Right ventricle myocardium inferior (tissue), 1 donor: ENCODE measurements at regions of chr3 and their contacts with region 1.

Region 1: DNA sequence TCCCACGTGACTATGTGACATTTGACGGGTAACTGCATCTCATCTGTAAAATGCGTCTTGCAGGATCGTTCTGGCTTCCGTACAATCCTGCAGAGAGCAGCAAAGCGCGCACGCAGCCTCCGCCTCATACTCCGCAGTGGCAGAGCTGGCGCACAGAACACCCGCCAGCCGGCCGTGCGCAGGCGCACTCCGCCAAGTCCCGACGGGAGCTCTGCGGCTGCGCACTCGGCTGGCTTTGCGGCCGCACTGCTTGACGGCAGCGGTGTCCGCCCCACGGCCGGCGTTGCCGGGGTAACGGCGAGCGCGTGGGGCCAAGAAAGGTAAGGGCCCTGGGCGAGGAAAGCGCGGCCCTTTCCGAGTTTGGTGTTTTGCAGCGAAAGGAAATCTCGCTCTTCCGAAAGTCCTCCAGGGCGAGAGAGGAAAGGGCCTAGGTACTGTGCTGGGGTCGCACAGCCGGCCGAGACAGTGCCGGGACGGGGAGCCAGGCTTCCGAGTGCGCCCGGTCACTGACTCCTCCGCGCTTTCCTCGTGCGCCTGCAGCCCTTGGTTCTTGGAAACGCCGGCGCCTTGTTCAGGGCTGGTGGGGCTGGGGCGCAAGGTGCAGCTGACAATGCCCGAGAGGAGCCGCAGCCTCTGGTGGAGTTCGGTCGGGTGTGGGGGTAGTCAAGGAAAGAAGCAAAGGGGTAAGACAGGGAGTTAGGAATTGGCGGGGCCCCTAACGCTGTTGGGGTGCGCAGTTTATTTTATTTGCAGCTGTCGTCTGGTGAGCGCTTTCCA is at the start of gene TSEN2:
- DNase-seq: peak; percentile 98
- ATAC-seq: peak; percentile 96
- total RNA-seq, gene TSEN2: 24.1 TPM

Region 2: DNA sequence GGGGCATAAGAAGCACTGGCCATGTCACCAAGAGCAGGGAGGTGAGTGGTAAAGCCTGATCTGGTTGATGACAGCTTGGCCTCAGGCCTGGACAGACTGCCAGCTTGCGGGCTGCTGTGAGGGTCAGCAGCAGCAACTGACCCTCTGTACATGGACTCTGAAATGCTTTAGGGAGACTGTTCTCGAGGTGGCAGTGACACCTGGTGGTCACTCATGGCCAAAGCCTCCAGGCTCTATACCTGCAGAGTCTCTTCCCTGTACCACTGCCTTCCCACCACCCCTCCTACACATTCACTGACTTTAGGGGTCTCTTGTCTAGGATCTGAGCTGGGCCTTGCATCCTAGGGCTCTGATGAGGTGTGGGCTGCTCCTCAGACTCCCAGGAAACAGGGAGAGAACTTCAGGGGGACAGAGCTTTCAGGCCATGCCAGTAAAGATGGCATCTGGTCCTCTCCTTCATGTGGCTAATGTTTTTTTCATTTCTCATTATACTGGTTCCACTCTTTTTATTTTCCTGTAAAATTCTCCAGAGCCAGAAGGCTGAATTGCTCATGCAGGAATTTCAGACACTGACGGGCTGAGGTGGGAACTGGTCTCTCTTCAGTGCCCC is 308.4 kb before region 1 on chr3:
- intact Hi-C with region 1: loop called (anchors 2 kb)
- DNase-seq: peak; percentile 78
- ATAC-seq: peak; percentile 79

Region 3: DNA sequence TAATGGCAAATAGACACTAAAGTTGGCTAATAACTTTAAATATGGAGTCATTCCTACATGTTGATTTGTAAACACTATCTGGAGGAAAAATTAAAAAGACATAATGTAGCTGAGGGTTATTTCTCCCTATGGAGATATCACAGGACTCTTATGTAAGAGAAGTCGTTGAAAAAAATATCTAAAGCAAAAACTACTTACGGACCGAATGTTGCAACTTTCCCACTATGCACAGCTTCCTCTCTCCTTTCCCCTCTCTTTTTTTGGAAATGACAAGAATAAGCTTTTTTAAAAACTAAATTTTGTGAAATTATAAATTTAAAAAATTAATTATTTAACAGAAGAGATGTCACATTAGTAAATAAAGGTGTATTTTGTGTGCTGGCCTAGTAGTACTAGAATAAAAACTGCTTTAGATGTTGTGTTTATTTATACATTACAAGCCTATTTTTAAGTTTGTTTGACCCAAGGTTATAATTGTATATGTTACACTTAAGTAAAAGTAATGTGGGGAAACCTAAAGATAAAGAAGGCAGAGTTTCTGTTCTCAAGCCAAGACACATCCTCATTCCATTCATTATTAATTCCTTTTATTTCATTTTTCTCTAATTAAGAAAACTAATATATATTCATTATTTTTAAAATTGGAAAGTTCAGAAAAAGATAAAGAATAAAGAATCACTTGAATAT is 216.2 kb before region 1 on chr3:
- intact Hi-C with region 1: no loop called
- DNase-seq: no peak
- ATAC-seq: no peak

Region 4: DNA sequence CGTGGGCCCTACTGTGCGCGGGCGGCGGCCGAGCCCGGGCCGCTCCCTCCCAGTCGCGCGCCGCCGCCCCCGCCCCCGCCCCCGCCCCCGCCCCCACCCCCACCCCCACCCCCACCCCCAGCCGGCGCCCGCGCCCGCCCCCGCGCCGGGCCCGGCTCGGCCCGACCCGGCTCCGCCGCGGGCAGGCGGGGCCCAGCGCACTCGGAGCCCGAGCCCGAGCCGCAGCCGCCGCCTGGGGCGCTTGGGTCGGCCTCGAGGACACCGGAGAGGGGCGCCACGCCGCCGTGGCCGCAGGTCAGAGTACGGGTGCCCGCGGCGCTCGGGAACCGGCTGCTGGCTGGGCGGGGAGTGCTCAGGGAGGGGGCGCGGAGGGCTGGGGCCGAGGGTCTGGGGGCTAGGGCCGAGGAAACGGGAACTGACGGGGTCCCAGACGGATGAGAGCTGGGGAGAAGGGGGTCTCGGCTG is 196.6 kb before region 1 on chr3:
- intact Hi-C with region 1: loop called (anchors 2 kb)
- DNase-seq: peak; percentile 81
- ATAC-seq: peak; percentile 93

Region 5: GRCh38 chr3:12681943-12682390 is 197.6 kb after region 1 on chr3:
- intact Hi-C with region 1: no loop called
- DNase-seq: no peak
- ATAC-seq: peak; percentile 82